PC-3 (cell line): ENCODE measurements at regions of chr19 and their contacts with region 1.

Region 1: DNA sequence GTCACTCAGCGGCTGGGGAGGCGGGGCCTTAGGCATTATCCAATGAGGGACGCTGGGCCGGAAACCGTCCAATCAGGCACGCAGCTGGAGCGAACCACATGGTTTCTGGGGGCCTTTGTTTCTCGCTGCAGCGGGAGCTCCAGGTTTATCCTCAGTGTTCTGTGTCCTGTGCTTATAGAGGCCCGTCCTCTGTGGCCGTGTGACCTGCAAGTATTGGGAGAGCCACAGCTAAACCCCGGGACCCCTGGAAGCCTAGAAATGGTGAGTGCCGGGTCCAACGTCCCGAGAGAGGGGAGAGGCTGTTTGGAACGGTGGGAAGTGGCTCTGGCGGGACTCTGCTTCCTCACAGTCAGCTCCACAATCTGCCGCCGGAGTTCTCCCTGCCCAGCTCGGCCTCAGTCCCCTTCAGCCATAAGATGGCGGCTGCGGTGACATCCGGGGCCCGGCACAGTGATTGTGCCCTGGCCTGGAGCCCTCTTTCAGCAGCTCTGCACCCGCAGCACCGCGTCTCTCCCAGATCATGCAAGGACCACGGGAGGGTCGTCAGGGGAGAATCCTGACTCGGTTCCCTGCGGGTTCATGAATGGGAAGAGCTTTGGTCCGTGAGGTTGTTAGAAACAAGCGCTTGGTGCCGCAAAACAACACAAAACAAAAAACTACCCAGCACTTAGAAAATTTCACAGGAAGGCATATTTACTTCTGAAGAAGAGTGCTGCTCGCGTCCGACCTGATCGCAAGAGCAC is at the start of gene ZNF253:
- DNase-seq: peak; percentile 77
- ATAC-seq: peak; percentile 99
- H3K4me3 ChIP-seq: peak within 1 kb of the TSS; percentile 77
- H3K27ac ChIP-seq: peak within 1 kb of the TSS; percentile 7; the same call in 1 of the 2 replicates
- H3K4me1 ChIP-seq: no peaks in the 10 kb centered on the region
- H3K27me3 ChIP-seq: no peaks in the 10 kb centered on the region
- CTCF ChIP-seq: no peak
- total RNA-seq, gene ZNF253: 0.75 and 1.1 TPM in 2 replicates

Region 2: DNA sequence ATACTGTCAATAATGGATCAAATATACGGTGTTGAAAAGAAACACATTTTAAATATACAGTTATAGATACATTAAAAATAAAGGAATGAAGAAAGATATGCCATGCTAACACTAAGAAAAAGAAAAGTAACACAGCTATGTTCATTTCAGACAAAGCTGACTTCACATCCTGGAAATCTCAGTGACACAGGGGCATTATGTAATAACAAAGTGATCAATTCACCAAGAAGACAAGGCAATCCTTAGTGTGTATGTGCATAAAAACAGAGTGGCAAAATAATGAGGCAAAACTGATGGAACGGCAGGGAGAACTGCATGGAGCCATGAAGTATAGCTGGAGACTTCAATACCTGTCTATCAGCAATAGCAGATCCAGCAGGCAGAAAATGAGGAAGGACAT is 146.1 kb before region 1 on chr19:
- CTCF ChIA-PET with region 1: no interaction called
- POLR2A ChIA-PET with region 1: no interaction called
- intact Hi-C with region 1: loop called (anchors 10 kb)
- DNase-seq: no peak
- ATAC-seq: no peak
- H3K4me3 ChIP-seq: no peak overlapping the region
- H3K27ac ChIP-seq: no peak overlapping the region
- H3K4me1 ChIP-seq: no peaks in the 10 kb centered on the region
- H3K27me3 ChIP-seq: no peaks in the 10 kb centered on the region
- CTCF ChIP-seq: no peak